ENCODE measurements at regions of chr16 and their contacts with region 1.

Region 1: DNA sequence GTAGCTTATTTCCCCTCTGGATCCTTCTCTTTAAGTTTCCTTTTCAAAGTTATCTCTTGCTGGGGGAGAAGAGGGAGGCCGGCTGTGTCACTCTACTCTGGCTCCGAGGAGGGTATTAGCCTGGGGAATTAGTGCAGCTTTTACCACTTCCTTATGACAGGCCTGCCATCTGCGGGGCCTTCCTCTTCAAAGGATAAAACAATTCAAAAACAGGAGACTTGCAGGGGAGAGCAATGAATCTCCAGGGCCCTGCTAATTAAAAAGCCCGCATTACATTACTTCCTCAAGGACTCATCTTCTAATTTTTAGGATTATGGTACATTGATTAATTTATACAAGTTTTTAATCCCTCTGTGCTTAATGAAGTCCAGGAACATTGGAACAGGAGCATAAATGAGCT is 190.9 kb upstream of the CDH5 start:
- DNase-seq: no peak
- ATAC-seq: no peak
- H3K4me3 ChIP-seq: no peak overlapping the region
- H3K4me3 Mint-ChIP-seq: no peak overlapping the region
- H3K27ac ChIP-seq: no peak overlapping the region
- H3K27ac Mint-ChIP-seq: no peak overlapping the region
- H3K4me1 ChIP-seq: no peaks in the 10 kb centered on the region
- H3K4me1 Mint-ChIP-seq: no peaks in the 10 kb centered on the region
- H3K27me3 ChIP-seq: no peaks in the 10 kb centered on the region
- H3K27me3 Mint-ChIP-seq: peaks cover 8% of the 10 kb centered on the region
- CTCF ChIP-seq: no peak

Region 2: GRCh38 chr16:66155933-66156332 is 19.7 kb before region 1 on chr16:
- CTCF ChIA-PET with region 1: no interaction called
- POLR2A ChIA-PET with region 1: no interaction called
- intact Hi-C with region 1: loop called in 1 of 2 experiments (anchors 1 kb)
- DNase-seq: no peak
- ATAC-seq: no peak
- H3K4me3 ChIP-seq: no peak overlapping the region
- H3K4me3 Mint-ChIP-seq: no peak overlapping the region
- H3K27ac ChIP-seq: no peak overlapping the region
- H3K27ac Mint-ChIP-seq: no peak overlapping the region
- H3K4me1 ChIP-seq: no peaks in the 10 kb centered on the region
- H3K4me1 Mint-ChIP-seq: no peaks in the 10 kb centered on the region
- H3K27me3 ChIP-seq: no peaks in the 10 kb centered on the region
- H3K27me3 Mint-ChIP-seq: peaks cover 1% of the 10 kb centered on the region
- CTCF ChIP-seq: no peak